Thyroid gland (tissue), 4 donors: ENCODE measurements at regions of chr6 and their contacts with region 1.

Region 1: DNA sequence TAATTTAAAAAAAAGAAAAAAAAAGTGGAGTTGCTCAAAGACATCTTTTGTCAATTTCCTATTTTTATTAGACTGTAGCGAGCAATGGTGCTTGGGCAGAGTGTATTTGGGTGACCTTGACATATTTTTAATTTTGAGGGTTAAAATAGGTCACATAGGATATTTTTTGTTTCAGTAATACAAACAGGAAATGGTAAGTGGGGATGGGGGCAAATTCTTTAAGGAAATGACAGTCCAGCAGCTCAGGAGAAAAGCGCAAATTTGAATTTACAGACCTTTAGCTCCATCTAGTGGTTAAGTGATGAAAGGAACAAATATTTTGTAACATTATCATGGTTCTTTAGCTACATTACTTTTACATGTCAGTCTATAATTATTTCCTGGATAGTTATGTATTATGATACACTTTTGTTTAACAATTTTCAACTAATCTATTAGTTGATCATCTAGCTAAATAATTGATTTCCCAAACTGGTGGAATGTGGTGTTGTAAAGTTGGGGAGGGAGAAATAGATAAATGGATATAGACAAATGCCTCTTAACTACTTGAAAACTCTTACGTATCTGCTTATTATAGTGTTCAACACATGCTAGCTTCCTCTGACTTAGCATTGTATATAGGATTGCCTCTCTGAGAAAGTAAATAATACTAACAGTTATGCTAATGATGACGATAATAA is 10.0 kb downstream of the CITED2 start:
- DNase-seq: no peak
- H3K4me3 ChIP-seq: no peak overlapping the region
- H3K27ac ChIP-seq: no peak overlapping the region
- H3K4me1 ChIP-seq: peaks cover 0 to 22% of the 10 kb centered on the region in 2 donors
- H3K27me3 ChIP-seq: no peaks in the 10 kb centered on the region
- CTCF ChIP-seq: peak; percentile 53 to 85 (median 70)
- POLR2A ChIP-seq: no peak

Region 2: GRCh38 chr6:138814179-138814834 is 550.1 kb before region 1 on chr6:
- intact Hi-C with region 1: loop called (anchors 5 kb)
- DNase-seq: no peak
- H3K4me3 ChIP-seq: no peak overlapping the region
- H3K27ac ChIP-seq: no peak overlapping the region
- H3K4me1 ChIP-seq: peaks cover 16 to 19% of the 10 kb centered on the region in 2 donors
- H3K27me3 ChIP-seq: no peaks in the 10 kb centered on the region
- CTCF ChIP-seq: no peak
- POLR2A ChIP-seq: no peak

Region 3: GRCh38 chr6:139230391-139230840 is 134.0 kb before region 1 on chr6:
- intact Hi-C with region 1: loop called (anchors 10 kb)
- DNase-seq: no peak
- H3K4me3 ChIP-seq: no peak overlapping the region
- H3K27ac ChIP-seq: no peak overlapping the region
- H3K4me1 ChIP-seq: no peaks in the 10 kb centered on the region
- H3K27me3 ChIP-seq: no peaks in the 10 kb centered on the region
- CTCF ChIP-seq: no peak
- POLR2A ChIP-seq: no peak

Region 4: DNA sequence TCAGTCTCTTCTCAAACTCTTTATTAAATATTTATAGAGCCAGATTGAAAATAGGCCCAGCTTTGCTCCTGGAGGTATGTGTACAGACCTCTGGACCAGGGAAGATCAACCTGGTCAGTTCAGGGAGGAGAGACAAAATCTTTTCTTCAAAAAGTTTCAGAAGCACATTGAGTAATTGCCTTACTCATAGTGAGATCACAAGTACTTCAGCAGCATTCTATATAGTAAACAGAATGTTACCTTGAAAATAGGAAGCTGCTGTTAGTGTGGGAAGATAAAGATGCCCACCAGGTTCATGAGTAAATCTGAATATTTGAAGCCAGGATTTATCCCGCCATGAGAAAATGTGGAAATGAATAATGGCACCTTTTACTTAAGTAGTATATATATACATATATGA is 676.0 kb after region 1 on chr6:
- intact Hi-C with region 1: no loop called
- DNase-seq: no peak
- H3K4me3 ChIP-seq: no peak overlapping the region
- H3K27ac ChIP-seq: no peak overlapping the region
- H3K4me1 ChIP-seq: peaks cover 5 to 22% of the 10 kb centered on the region in 2 donors
- H3K27me3 ChIP-seq: no peaks in the 10 kb centered on the region
- CTCF ChIP-seq: no peak
- POLR2A ChIP-seq: no peak